MCF 10A (cell line): ENCODE measurements at regions of chr1 and their contacts with region 1.

Region 1: DNA sequence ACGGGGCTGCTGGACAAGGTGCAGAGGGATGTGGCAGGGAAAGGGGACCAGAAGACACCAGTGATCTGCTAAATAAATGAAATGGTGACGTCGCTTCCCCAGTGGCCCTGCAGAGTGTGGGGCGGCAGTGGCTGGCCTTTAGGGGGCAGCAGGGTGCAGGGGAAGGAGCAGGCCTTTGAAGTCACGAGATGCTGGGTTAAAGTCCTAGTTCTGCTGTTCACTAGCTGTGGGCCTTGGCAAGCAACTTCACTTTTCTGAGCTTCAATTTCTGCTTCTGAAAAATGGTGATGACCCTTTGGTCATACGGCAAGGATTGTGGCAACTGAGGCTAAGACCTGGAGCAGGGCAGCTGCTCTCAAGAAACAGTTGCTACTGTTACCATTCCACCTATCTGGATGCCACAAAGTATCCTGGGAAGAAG is 9.2 kb upstream of the GALE start:
- DNase-seq: peak; percentile 77
- H3K4me3 Mint-ChIP-seq: no peak overlapping the region
- H3K27ac Mint-ChIP-seq: no peak overlapping the region
- H3K4me1 Mint-ChIP-seq: peaks cover 14% of the 10 kb centered on the region
- H3K27me3 Mint-ChIP-seq: no peaks in the 10 kb centered on the region
- CTCF ChIP-seq: peak; percentile 72

Region 2: GRCh38 chr1:23704834-23705495 is 104.8 kb before region 1 on chr1:
- CTCF ChIA-PET with region 1: no interaction called
- POLR2A ChIA-PET with region 1: no interaction called
- intact Hi-C with region 1: no loop called
- DNase-seq: no peak
- H3K4me3 Mint-ChIP-seq: no peak overlapping the region
- H3K27ac Mint-ChIP-seq: no peak overlapping the region
- H3K4me1 Mint-ChIP-seq: peaks cover 6% of the 10 kb centered on the region
- H3K27me3 Mint-ChIP-seq: no peaks in the 10 kb centered on the region
- CTCF ChIP-seq: no peak

Region 3: GRCh38 chr1:23867953-23868556 is 58.3 kb after region 1 on chr1 and contains the start of gene FUCA1:
- CTCF ChIA-PET with region 1: interaction called, 16 read pairs
- POLR2A ChIA-PET with region 1: interaction called, 4 read pairs
- intact Hi-C with region 1: loop called (anchors 1 kb)
- DNase-seq: peak; percentile 87
- H3K4me3 Mint-ChIP-seq: peak within 1 kb of the TSS; percentile 70
- H3K27ac Mint-ChIP-seq: peak within 1 kb of the TSS; percentile 40
- H3K4me1 Mint-ChIP-seq: peaks cover 30% of the 10 kb centered on the region
- H3K27me3 Mint-ChIP-seq: peaks cover 16% of the 10 kb centered on the region
- CTCF ChIP-seq: peak; percentile 83
- total RNA-seq, gene FUCA1: 7.9 and 8.6 TPM in 2 replicates

Region 4: GRCh38 chr1:24027838-24028468 is 218.2 kb after region 1 on chr1:
- CTCF ChIA-PET with region 1: interaction called, 21 read pairs
- POLR2A ChIA-PET with region 1: no interaction called
- intact Hi-C with region 1: loop called (anchors 2 kb)
- DNase-seq: peak; percentile 57
- H3K4me3 Mint-ChIP-seq: no peak overlapping the region
- H3K27ac Mint-ChIP-seq: peak overlapping the region; percentile 40
- H3K4me1 Mint-ChIP-seq: peaks cover 6% of the 10 kb centered on the region
- H3K27me3 Mint-ChIP-seq: no peaks in the 10 kb centered on the region
- CTCF ChIP-seq: peak; percentile 49